Naive thymus-derived CD4-positive, alpha-beta T cell (primary cell): ENCODE measurements at regions of chr7 and their contacts with region 1.

Region 1: GRCh38 chr7:134632937-134633540 is 13.6 kb upstream of the BPGM start:
- DNase-seq: peak in 7 of 9 donors; percentile 51 to 75 (median 64)
- ATAC-seq: peak; percentile 89
- H3K4me3 ChIP-seq: no peak overlapping the region
- H3K4me3 Mint-ChIP-seq: no peak overlapping the region
- H3K27ac ChIP-seq: no peak overlapping the region
- H3K27ac Mint-ChIP-seq: peak overlapping the region in 1 of 9 donors; percentile 1
- H3K4me1 ChIP-seq: peaks cover 12% of the 10 kb centered on the region in 2 donors
- H3K4me1 Mint-ChIP-seq: peaks cover 17 to 35% (median 23%) of the 10 kb centered on the region in 7 donors
- H3K27me3 ChIP-seq: peaks cover 0 to 5% of the 10 kb centered on the region in 2 donors
- H3K27me3 Mint-ChIP-seq: peaks cover 6 to 19% (median 12%) of the 10 kb centered on the region in 5 donors

Region 2: GRCh38 chr7:134690016-134690415 is 57.0 kb after region 1 on chr7:
- CTCF ChIA-PET with region 1: interaction called, 51 read pairs
- POLR2A ChIA-PET with region 1: no interaction called
- intact Hi-C with region 1: no loop called
- DNase-seq: peak in 1 of 9 donors; percentile 12
- ATAC-seq: no peak
- H3K4me3 ChIP-seq: no peak overlapping the region
- H3K4me3 Mint-ChIP-seq: no peak overlapping the region
- H3K27ac ChIP-seq: no peak overlapping the region
- H3K27ac Mint-ChIP-seq: peak overlapping the region in 6 of 9 donors; percentile 10 to 43 (median 34)
- H3K4me1 ChIP-seq: peaks cover 0 to 5% of the 10 kb centered on the region in 2 donors
- H3K4me1 Mint-ChIP-seq: peaks cover 6 to 26% (median 14%) of the 10 kb centered on the region in 7 donors
- H3K27me3 ChIP-seq: no peaks in the 10 kb centered on the region
- H3K27me3 Mint-ChIP-seq: peaks cover 0 to 7% (median 0%) of the 10 kb centered on the region in 5 donors

Region 3: DNA sequence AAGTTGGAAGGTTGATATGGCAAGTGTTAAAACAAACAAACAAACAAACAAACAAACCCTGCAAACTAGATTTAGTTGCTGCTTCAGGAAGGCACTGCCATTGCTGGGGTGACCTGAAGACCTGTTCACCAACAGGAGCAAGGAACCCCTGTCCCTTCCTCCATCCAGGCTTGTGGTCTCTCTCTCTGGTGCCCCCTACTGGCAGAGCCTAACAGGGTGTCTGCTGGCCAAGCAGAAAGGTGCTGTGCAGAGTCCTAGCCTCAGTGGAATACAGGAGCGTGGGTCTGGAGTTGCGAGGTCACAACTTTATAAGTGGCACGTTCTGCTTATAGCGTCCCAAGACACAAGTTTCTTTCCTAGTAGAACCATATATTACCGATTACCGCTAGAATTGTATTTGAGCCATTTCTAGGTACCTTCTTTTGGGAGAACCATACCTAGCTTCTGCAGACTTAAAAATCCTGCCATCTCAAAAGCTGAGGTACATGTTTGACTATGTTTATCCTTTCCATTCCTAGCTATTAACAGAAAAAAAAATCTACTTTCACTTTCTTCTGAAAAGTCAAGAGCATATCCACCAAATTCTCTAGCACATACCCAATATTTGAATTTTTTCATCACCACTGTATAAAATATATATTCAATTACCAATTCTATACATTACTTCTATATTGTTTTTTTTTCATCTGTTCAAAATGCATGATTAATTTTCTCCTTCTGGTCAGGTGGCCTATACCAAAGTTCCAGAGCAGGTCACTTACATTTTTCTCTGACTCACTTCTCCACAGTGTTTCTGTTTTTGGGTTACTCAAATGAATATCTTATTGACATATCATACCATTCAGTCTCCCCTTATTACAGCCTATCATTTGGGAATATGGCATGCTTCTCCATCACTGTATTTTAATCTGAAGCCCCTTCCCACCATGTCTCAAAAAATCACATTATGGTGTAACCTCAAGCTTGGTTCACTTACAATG is 117.3 kb after region 1 on chr7:
- CTCF ChIA-PET with region 1: interaction called, 86 read pairs
- POLR2A ChIA-PET with region 1: no interaction called
- intact Hi-C with region 1: loop called (anchors 1 kb)
- DNase-seq: peak; percentile 26 to 68 (median 49)
- ATAC-seq: peak; percentile 87
- H3K4me3 ChIP-seq: no peak overlapping the region
- H3K4me3 Mint-ChIP-seq: no peak overlapping the region
- H3K27ac ChIP-seq: no peak overlapping the region
- H3K27ac Mint-ChIP-seq: no peak overlapping the region
- H3K4me1 ChIP-seq: no peaks in the 10 kb centered on the region
- H3K4me1 Mint-ChIP-seq: peaks cover 0 to 10% (median 0%) of the 10 kb centered on the region in 7 donors
- H3K27me3 ChIP-seq: no peaks in the 10 kb centered on the region
- H3K27me3 Mint-ChIP-seq: no peaks in the 10 kb centered on the region

Region 4: DNA sequence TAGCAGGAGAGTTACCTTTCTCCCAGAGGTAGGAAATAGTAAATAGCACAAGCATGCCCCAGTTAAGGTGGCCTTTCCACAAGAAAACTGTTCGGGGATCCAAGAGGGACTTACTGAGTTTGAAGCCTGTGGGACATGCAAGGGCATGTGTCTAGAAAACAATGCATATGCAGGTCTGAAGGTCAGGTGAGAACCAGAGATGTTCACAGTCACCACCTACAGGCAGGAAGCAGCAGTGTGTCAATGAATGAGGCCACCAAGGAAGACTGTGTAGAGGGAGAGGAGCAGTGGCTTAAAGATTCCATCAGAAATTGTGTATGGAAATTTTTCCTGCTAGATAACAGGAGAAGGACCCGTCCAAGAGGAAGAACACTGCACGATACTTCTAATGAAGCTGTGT is 212.4 kb after region 1 on chr7:
- CTCF ChIA-PET with region 1: interaction called, 5 read pairs
- POLR2A ChIA-PET with region 1: no interaction called
- intact Hi-C with region 1: loop called in 1 of 2 experiments (anchors 1 kb)
- DNase-seq: peak in 1 of 9 donors; percentile 8
- ATAC-seq: no peak
- H3K4me3 ChIP-seq: no peak overlapping the region
- H3K4me3 Mint-ChIP-seq: no peak overlapping the region
- H3K27ac ChIP-seq: no peak overlapping the region
- H3K27ac Mint-ChIP-seq: peak overlapping the region in 1 of 9 donors; percentile 21
- H3K4me1 ChIP-seq: no peaks in the 10 kb centered on the region
- H3K4me1 Mint-ChIP-seq: peaks cover 2 to 29% (median 22%) of the 10 kb centered on the region in 7 donors
- H3K27me3 ChIP-seq: no peaks in the 10 kb centered on the region
- H3K27me3 Mint-ChIP-seq: peaks cover 0 to under 1% (median 0%) of the 10 kb centered on the region in 5 donors

Region 5: GRCh38 chr7:134954197-134955082 is 321.4 kb after region 1 on chr7:
- CTCF ChIA-PET with region 1: interaction called, 64 read pairs
- POLR2A ChIA-PET with region 1: interaction called, 3 read pairs
- intact Hi-C with region 1: loop called (anchors 1 kb)
- DNase-seq: peak in 6 of 9 donors; percentile 29 to 63 (median 48)
- ATAC-seq: peak; percentile 59
- H3K4me3 ChIP-seq: no peak overlapping the region
- H3K4me3 Mint-ChIP-seq: no peak overlapping the region
- H3K27ac ChIP-seq: no peak overlapping the region
- H3K27ac Mint-ChIP-seq: peak overlapping the region in 1 of 9 donors; percentile 26
- H3K4me1 ChIP-seq: no peaks in the 10 kb centered on the region
- H3K4me1 Mint-ChIP-seq: peaks cover 0 to under 1% (median 0%) of the 10 kb centered on the region in 7 donors
- H3K27me3 ChIP-seq: no peaks in the 10 kb centered on the region
- H3K27me3 Mint-ChIP-seq: no peaks in the 10 kb centered on the region